IMR-90 (cell line): ENCODE measurements at regions of chr19 and their contacts with region 1.

Region 1: DNA sequence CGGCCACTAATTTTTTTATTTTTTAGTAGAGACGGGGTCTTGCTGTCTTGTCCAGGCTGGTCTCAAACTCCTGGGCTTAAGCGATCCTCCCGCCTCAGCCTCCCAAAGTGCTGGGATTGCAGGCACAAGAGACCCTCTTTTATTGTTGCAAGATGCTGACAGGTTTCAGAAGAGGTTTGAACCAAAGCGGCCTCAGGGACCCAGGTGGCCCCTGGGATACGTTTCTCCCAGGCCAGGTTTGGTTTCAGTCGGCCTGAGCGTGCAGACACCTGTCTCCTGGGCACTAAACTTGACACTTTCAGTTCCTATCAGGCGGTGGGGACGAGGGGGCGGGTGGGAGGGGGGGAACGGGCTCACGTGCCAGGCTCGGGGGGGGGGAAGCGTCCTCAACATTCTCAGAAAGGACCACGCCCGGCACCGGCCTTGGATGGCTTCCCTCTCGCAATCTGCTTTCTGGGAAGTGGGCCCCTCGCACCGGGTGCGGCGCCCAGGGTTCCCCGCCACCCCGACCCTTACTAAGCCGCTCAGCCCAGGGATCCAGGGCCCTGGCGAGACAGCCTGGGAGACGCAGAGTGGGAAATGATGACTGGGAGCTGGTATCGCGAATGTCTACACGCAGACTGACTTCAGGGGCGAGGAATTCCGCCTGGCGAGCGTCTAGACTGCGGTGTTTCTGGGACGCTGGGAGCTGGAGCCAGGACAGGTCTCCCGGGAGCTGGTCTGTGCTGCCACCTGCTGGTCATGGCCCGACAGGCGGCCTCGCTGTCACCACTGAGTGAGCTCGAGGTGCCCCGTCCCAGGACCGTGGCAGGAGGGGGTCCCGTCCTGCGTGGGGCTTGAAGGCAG is 91.6 kb downstream of the GNG7 start:
- DNase-seq: peak; percentile 94
- ATAC-seq: peak; percentile 97
- H3K4me3 ChIP-seq: peak overlapping the region; percentile 21
- H3K27ac ChIP-seq: peak overlapping the region; percentile 8; the same call in 1 of the 2 replicates
- H3K4me1 ChIP-seq: no peaks in the 10 kb centered on the region
- H3K27me3 ChIP-seq: peaks cover 8% of the 10 kb centered on the region
- CTCF ChIP-seq: peak; percentile 99
- POLR2A ChIP-seq: no peak
- RAD21 ChIP-seq: peak; percentile 96

Region 2: GRCh38 chr19:2273356-2274184 is 337.3 kb before region 1 on chr19:
- CTCF ChIA-PET with region 1: no interaction called
- POLR2A ChIA-PET with region 1: interaction called, 3 read pairs
- dilution Hi-C with region 1: no loop called
- in situ Hi-C with region 1: loop called (anchors 10 kb)
- intact Hi-C with region 1: no loop called
- DNase-seq: peak; percentile 52
- ATAC-seq: peak; percentile 5
- H3K4me3 ChIP-seq: no peak overlapping the region
- H3K27ac ChIP-seq: peak overlapping the region; percentile 16; the same call in 1 of the 2 replicates
- H3K4me1 ChIP-seq: peaks cover 14% of the 10 kb centered on the region
- H3K27me3 ChIP-seq: no peaks in the 10 kb centered on the region
- CTCF ChIP-seq: peak; percentile 88
- POLR2A ChIP-seq: no peak
- RAD21 ChIP-seq: peak; percentile 60

Region 3: GRCh38 chr19:2328401-2329148 is 282.3 kb before region 1 on chr19 and contains the starts of genes LSM7 and SPPL2B:
- CTCF ChIA-PET with region 1: no interaction called
- POLR2A ChIA-PET with region 1: no interaction called
- dilution Hi-C with region 1: no loop called
- in situ Hi-C with region 1: no loop called
- intact Hi-C with region 1: loop called (anchors 5 kb)
- DNase-seq: peak; percentile 83
- ATAC-seq: peak; percentile 86
- H3K4me3 ChIP-seq: peak within 1 kb of the TSS; percentile 94
- H3K27ac ChIP-seq: peak within 1 kb of the TSS; percentile 92
- H3K4me1 ChIP-seq: peaks cover 4% of the 10 kb centered on the region
- H3K27me3 ChIP-seq: no peaks in the 10 kb centered on the region
- CTCF ChIP-seq: no peak
- POLR2A ChIP-seq: peak; percentile 69; the same call in 1 of the 2 replicates
- RAD21 ChIP-seq: no peak
- total RNA-seq, gene LSM7: 145 and 200 TPM in 2 replicates
- total RNA-seq, gene SPPL2B: 3.4 and 4.2 TPM in 2 replicates

Region 4: GRCh38 chr19:2427429-2428320 is 183.2 kb before region 1 on chr19 and contains the start of gene TIMM13:
- CTCF ChIA-PET with region 1: interaction called, 6 read pairs
- POLR2A ChIA-PET with region 1: no interaction called
- dilution Hi-C with region 1: no loop called
- in situ Hi-C with region 1: no loop called
- intact Hi-C with region 1: loop called (anchors 1 kb)
- DNase-seq: peak; percentile 95
- ATAC-seq: peak; percentile 88
- H3K4me3 ChIP-seq: peak within 1 kb of the TSS; percentile 68
- H3K27ac ChIP-seq: peak within 1 kb of the TSS; percentile 97
- H3K4me1 ChIP-seq: peaks cover 12% of the 10 kb centered on the region
- H3K27me3 ChIP-seq: no peaks in the 10 kb centered on the region
- CTCF ChIP-seq: no peak
- POLR2A ChIP-seq: peak; percentile 64
- RAD21 ChIP-seq: no peak
- total RNA-seq, gene TIMM13: 21.0 and 29.2 TPM in 2 replicates

Region 5: GRCh38 chr19:2636897-2637683 is 26.2 kb after region 1 on chr19:
- CTCF ChIA-PET with region 1: interaction called, 12 read pairs
- POLR2A ChIA-PET with region 1: no interaction called
- dilution Hi-C with region 1: no loop called
- in situ Hi-C with region 1: no loop called
- intact Hi-C with region 1: no loop called
- DNase-seq: peak; percentile 31
- ATAC-seq: peak; percentile 91
- H3K4me3 ChIP-seq: no peak overlapping the region
- H3K27ac ChIP-seq: no peak overlapping the region
- H3K4me1 ChIP-seq: peaks cover 5% of the 10 kb centered on the region; the same call in 1 of the 2 replicates
- H3K27me3 ChIP-seq: peaks cover 16% of the 10 kb centered on the region
- CTCF ChIP-seq: peak; percentile 78
- POLR2A ChIP-seq: no peak
- RAD21 ChIP-seq: peak; percentile 76